A673 (cell line): ENCODE measurements at regions of chr1 and their contacts with region 1.

Region 1: DNA sequence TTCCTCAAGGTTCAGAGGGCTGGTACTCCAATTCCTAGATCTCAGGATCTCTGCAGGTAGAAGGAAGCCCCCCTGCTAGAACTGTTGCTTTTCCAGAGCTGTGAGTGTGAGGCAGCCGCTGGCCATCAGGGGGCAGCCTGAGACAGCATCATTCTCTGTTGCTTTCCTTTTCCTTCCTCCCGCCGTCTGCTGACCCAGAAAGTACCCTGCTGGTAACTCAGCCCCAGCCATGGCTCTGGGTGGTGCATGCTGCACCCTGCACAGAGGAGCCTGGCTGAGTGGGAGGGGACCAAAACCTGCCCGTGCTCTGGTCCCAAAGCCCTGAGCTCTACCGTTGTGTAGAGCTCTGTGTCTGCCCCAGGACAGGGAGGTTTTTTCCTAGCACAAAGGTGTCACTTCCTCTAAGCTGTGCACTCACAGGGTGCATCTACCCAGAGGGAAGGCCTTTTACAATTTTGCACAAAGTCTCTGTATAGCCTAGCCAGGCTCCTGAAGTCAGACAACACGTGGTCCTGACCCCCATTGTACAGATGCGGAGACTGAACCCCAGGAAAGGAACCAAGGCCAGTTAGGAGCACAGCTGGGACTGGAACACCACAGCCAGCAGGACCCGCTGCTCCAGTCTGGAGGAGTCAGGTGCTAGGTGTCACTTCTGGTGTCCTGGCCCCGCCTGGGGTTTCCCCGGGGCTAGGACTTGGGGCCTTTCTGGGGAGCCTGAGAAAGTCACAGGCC is 5.6 kb upstream of the FAM131C start:
- DNase-seq: peak; percentile 86
- H3K4me3 ChIP-seq: no peak overlapping the region
- H3K27ac ChIP-seq: no peak overlapping the region
- H3K4me1 ChIP-seq: no peaks in the 10 kb centered on the region
- H3K27me3 ChIP-seq: no peaks in the 10 kb centered on the region
- CTCF ChIP-seq: peak; percentile 96

Region 2: GRCh38 chr1:15524283-15525042 is 554.6 kb before region 1 on chr1:
- CTCF ChIA-PET with region 1: no interaction called
- POLR2A ChIA-PET with region 1: interaction called, 16 read pairs
- intact Hi-C with region 1: no loop called
- DNase-seq: peak; percentile 98
- H3K4me3 ChIP-seq: peak overlapping the region; percentile 93
- H3K27ac ChIP-seq: peak overlapping the region; percentile 98
- H3K4me1 ChIP-seq: peaks cover 14% of the 10 kb centered on the region
- H3K27me3 ChIP-seq: no peaks in the 10 kb centered on the region
- CTCF ChIP-seq: no peak

Region 3: DNA sequence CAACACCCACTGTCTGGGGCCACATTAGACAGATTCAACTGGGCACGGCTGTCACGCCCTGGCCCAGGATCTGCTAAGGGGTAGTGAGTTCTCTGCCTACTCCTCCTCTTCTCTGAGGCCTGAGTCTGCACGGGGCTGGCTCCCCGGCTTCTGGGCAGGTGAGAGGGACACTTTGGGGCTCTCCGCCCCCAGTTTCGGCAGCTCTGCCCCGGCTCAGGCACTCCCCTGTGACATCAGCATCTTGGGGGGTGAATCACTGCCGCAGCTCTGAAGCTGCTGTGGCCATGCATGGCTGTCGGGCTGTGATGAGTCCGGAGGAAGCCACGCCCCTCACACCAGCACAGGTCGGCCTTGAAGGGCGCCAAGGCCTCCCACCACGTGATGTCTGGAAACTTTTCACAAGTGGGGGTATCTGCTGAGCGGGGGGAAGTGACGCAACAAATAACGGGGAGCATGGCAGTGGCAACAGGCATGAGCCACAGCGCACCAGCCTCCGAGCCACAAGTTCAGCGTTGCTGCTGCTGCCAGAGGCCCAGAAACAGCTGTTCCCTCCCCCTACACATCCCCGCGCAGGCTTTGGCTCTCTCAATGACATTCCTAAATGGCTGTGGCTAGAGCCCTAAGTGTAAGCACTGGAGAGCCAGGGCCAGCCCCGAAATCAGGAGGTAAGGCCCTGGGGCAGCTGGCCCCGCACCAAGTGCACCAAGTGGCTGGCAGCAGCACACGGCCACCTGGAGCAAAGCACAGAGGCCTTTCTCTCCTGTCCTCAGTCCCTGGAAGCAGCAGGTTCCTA is 129.4 kb before region 1 on chr1:
- CTCF ChIA-PET with region 1: no interaction called
- POLR2A ChIA-PET with region 1: no interaction called
- intact Hi-C with region 1: no loop called
- DNase-seq: peak; percentile 69
- H3K4me3 ChIP-seq: no peak overlapping the region
- H3K27ac ChIP-seq: peak overlapping the region; percentile 57
- H3K4me1 ChIP-seq: peaks cover 62% of the 10 kb centered on the region
- H3K27me3 ChIP-seq: no peaks in the 10 kb centered on the region
- CTCF ChIP-seq: no peak

Region 4: DNA sequence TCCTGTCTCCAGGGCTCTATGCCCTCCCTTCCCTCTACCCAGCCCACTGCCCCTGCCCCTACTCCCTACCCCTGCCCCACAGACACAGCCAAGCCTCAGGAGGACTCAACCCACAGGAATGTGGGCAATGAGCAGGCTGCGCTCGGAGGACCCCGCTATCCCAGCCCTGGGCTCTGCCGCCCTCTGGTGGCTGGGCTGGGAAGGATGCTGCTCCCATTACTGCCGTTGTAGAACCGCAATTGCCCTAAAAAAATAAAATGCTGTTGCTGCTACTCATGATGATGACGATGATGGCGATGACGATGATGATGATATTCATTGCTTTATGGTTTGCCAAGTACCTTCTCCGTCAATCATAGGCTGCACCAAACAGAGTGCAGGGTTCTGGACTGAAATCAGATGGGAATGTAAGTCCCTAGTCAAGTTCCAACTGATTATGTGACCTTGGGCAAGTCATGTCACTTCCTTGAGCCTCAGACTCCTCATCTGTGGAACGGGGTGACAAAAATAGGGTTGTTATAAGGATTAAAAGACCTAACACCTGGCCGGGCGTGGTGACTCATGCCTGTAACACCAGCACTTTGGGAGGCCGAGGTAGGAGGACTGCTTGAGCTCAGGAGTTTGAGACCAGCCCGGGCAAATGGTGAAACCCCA is 108.8 kb after region 1 on chr1:
- CTCF ChIA-PET with region 1: interaction called, 28 read pairs
- POLR2A ChIA-PET with region 1: no interaction called
- intact Hi-C with region 1: loop called (anchors 1 kb)
- DNase-seq: peak; percentile 83
- H3K4me3 ChIP-seq: no peak overlapping the region
- H3K27ac ChIP-seq: no peak overlapping the region
- H3K4me1 ChIP-seq: peaks cover 11% of the 10 kb centered on the region
- H3K27me3 ChIP-seq: no peaks in the 10 kb centered on the region
- CTCF ChIP-seq: peak; percentile 98

Region 5: DNA sequence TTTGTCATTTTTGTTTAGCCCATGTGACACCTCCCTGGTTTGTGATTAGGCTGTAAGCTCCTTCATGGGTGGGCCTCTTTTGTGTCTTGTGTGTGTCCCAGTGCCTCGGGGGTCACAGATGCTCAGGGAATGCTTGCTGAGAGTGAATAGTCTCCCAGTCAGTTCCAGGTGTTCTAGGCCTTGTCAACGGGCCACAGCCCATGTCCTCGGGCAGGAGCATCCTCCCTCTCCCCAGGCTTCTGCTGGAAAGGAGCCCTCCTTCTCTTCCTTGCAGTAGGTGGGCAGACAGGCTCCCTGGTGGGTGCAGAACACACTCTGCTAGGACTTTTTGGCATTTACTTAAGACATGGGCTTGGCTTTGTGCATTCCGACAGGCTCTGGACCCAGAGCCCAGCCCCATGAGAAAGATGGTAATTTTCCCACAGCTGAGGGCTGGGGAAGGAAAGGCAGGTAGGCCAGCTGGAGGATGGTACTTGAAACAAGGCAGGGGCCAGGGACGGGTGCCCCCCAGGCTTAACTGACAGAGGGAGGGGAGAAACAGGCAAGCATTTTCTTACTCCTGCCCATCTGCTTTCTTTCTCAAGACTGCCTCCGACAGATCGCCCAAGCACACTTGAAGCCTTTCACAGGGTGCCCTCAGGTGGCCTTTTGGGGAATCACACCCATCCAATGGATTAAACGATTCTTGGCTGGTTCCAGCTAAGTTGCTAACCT is 165.0 kb after region 1 on chr1:
- CTCF ChIA-PET with region 1: interaction called, 13 read pairs
- POLR2A ChIA-PET with region 1: no interaction called
- intact Hi-C with region 1: loop called (anchors 2 kb)
- DNase-seq: peak; percentile 88
- H3K4me3 ChIP-seq: no peak overlapping the region
- H3K27ac ChIP-seq: no peak overlapping the region
- H3K4me1 ChIP-seq: peaks cover 21% of the 10 kb centered on the region
- H3K27me3 ChIP-seq: no peaks in the 10 kb centered on the region
- CTCF ChIP-seq: peak; percentile 86

Region 6: DNA sequence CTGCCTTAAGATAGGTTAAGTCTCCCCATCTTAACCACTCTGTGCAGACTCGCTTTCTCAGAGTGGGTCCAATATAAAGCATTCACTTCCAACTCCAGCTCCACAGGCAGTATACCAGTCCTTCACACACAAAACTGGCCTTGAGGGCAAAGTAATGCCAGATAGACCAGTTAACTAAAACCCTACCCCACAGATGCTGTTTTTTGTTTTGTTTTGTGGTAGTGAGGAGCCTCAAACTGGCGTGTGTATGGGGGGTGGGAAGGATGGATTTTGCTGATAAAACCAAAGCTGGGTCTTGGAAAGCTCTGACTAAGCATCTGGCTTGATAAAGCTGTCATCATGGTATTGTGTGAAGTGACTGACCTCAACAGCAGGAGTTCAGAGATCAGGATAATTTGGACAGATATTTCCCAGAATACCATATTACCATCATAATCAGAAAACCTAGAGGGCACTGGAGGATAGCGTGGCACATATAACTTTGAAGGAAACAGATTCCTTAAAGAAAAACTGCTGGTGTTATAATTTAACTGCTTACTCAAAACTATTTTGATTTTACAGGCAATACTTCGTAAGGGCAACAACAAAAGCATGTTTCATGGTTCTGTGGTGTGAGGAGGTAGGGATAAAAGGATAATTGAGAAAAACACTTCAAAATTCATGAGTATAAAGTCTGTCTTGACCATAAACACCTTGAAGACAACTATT is 187.5 kb after region 1 on chr1:
- CTCF ChIA-PET with region 1: no interaction called
- POLR2A ChIA-PET with region 1: no interaction called
- intact Hi-C with region 1: no loop called
- DNase-seq: no peak
- H3K4me3 ChIP-seq: no peak overlapping the region
- H3K27ac ChIP-seq: no peak overlapping the region
- H3K4me1 ChIP-seq: no peaks in the 10 kb centered on the region
- H3K27me3 ChIP-seq: no peaks in the 10 kb centered on the region
- CTCF ChIP-seq: no peak

Region 7: GRCh38 chr1:16372535-16373285 is 293.6 kb after region 1 on chr1:
- CTCF ChIA-PET with region 1: no interaction called
- POLR2A ChIA-PET with region 1: interaction called, 19 read pairs
- intact Hi-C with region 1: no loop called
- DNase-seq: no peak
- H3K4me3 ChIP-seq: no peak overlapping the region
- H3K27ac ChIP-seq: no peak overlapping the region
- H3K4me1 ChIP-seq: peaks cover 33% of the 10 kb centered on the region
- H3K27me3 ChIP-seq: no peaks in the 10 kb centered on the region
- CTCF ChIP-seq: no peak